Cardiac septum (tissue), 1 donor: ENCODE measurements at regions of chr11 and their contacts with region 1.

Region 1: DNA sequence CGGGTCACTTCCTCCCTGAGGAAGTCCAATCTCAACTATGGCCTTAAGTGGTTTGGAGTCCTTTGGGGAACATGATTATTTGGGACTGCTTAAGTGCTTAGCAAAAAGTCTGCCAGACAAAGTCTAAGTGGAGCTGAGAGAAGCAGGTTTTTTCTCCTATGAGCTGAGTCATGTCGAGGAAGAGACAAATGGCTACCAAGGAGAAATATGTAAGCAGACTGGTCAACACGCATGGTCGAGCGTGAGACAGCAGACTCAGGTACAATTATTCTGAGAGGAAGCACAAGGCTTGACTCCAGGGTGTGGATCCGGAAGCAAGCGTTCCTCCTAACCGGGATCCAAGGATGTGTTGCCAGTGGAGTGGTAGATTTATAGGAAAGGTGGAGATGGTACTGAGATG is 30.6 kb downstream of the UBASH3B start:
- DNase-seq: no peak

Region 2: DNA sequence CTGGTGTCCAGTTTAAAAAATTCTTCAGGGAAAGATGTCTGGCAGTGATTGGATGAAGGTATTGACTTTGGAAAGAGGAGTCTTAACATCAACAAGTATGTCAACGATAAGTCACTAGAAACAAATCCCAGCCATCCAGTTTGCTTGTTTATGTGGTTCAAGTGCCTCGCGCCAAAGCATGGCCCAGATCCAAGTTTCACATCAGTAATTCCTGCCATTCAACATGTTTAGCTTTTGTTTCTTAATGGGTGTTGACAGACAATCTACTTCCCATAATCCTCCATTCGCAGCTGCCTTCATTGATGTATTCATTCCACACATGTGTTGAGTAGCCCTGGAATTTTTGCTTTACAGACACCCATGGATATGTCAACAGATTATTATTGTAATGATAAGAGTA is 47.2 kb after region 1 on chr11:
- intact Hi-C with region 1: loop called (anchors 5 kb)
- DNase-seq: no peak